ENCODE measurements at regions of chr16 and their contacts with region 1.

Region 1: GRCh38 chr16:26139886-26140285 is 448.1 kb downstream of the HS3ST4 start:
- DNase-seq: no peak
- ATAC-seq: no peak
- H3K4me3 ChIP-seq: no peak overlapping the region
- H3K27ac ChIP-seq: no peak overlapping the region
- H3K4me1 ChIP-seq: no peaks in the 10 kb centered on the region
- H3K27me3 ChIP-seq: no peaks in the 10 kb centered on the region
- CTCF ChIP-seq: no peak

Region 2: GRCh38 chr16:25299792-25300590 is 839.9 kb before region 1 on chr16:
- intact Hi-C with region 1: loop called in 1 of 10 experiments (anchors 5 kb)
- DNase-seq: no peak
- ATAC-seq: no peak
- H3K4me3 ChIP-seq: no peak overlapping the region
- H3K27ac ChIP-seq: no peak overlapping the region
- H3K4me1 ChIP-seq: no peaks in the 10 kb centered on the region
- H3K27me3 ChIP-seq: peaks cover 0 to 1% (median 0%) of the 10 kb centered on the region in 7 donors
- CTCF ChIP-seq: no peak

Region 3: DNA sequence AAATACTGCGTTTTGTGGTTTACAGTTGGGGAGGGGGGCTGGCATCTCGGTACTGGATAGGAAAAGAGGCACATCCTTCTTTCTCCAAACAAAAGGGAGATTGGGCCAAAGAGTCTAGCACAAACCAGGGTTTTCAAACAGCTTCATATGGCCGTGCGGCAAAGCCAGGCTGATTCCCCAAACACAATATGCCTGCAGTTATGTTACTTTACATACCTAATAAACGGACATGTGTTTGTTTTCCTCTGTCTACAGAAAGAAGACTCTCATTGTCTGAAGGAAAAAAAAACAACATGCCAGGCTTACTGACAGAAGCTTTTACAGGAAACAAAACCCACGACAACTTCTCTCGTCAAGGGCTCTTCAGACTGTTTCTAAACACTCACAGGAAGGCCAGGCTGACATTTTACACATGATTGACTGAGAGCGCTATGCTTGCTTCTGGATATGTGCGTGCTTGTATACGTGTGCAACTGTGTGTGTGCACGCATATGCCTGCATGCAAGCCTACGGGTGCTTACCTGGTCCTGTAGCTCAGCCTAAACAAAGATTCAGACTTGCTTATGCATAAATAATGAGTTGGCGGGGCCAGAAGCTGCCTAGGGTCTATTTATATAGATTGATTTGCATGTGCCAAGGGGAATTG is 465.9 kb after region 1 on chr16:
- intact Hi-C with region 1: no loop called
- DNase-seq: no peak
- ATAC-seq: no peak
- H3K4me3 ChIP-seq: no peak overlapping the region
- H3K27ac ChIP-seq: no peak overlapping the region
- H3K4me1 ChIP-seq: no peaks in the 10 kb centered on the region
- H3K27me3 ChIP-seq: peaks cover 0 to 40% (median 0%) of the 10 kb centered on the region in 7 donors
- CTCF ChIP-seq: no peak